ENCODE measurements at regions of chr14 and their contacts with region 1.

Region 1: GRCh38 chr14:21997300-21997699 is 323.7 kb upstream of the OR4E1 start:
- DNase-seq: no peak
- H3K4me3 ChIP-seq: no peak overlapping the region
- H3K27ac ChIP-seq: no peak overlapping the region
- H3K4me1 ChIP-seq: no peaks in the 10 kb centered on the region
- H3K27me3 ChIP-seq: no peaks in the 10 kb centered on the region
- CTCF ChIP-seq: peak; percentile 53 to 71 (median 60)
- EP300 ChIP-seq: no peak
- POLR2A ChIP-seq: no peak
- RAD21 ChIP-seq: peak; percentile 52 to 63

Region 2: GRCh38 chr14:21978184-21978998 is 18.9 kb before region 1 on chr14:
- CTCF ChIA-PET with region 1: interaction called, 40 read pairs
- POLR2A ChIA-PET with region 1: interaction called, 3 read pairs
- DNase-seq: peak in 1 of 2 experiments; percentile 84
- H3K4me3 ChIP-seq: no peak overlapping the region
- H3K27ac ChIP-seq: no peak overlapping the region
- H3K4me1 ChIP-seq: no peaks in the 10 kb centered on the region
- H3K27me3 ChIP-seq: peaks cover 0 to 1% (median 0%) of the 10 kb centered on the region in 4 experiments; a peak in 1 of 7 replicates
- CTCF ChIP-seq: peak; percentile 81 to 93 (median 89)
- EP300 ChIP-seq: no peak
- POLR2A ChIP-seq: no peak
- RAD21 ChIP-seq: peak; percentile 61 to 65

Region 3: GRCh38 chr14:22010545-22011252 is 13.4 kb after region 1 on chr14:
- CTCF ChIA-PET with region 1: interaction called, 24 read pairs
- POLR2A ChIA-PET with region 1: no interaction called
- DNase-seq: no peak
- H3K4me3 ChIP-seq: no peak overlapping the region
- H3K27ac ChIP-seq: no peak overlapping the region
- H3K4me1 ChIP-seq: no peaks in the 10 kb centered on the region
- H3K27me3 ChIP-seq: no peaks in the 10 kb centered on the region
- CTCF ChIP-seq: no peak
- EP300 ChIP-seq: no peak
- POLR2A ChIP-seq: no peak
- RAD21 ChIP-seq: no peak

Region 4: GRCh38 chr14:22047115-22047514 is 49.8 kb after region 1 on chr14:
- CTCF ChIA-PET with region 1: interaction called, 18 read pairs
- POLR2A ChIA-PET with region 1: no interaction called
- DNase-seq: no peak
- H3K4me3 ChIP-seq: no peak overlapping the region
- H3K27ac ChIP-seq: no peak overlapping the region
- H3K4me1 ChIP-seq: no peaks in the 10 kb centered on the region
- H3K27me3 ChIP-seq: no peaks in the 10 kb centered on the region
- CTCF ChIP-seq: peak; percentile 13 to 71 (median 58)
- EP300 ChIP-seq: no peak
- POLR2A ChIP-seq: no peak
- RAD21 ChIP-seq: peak; percentile 55 to 65

Region 5: DNA sequence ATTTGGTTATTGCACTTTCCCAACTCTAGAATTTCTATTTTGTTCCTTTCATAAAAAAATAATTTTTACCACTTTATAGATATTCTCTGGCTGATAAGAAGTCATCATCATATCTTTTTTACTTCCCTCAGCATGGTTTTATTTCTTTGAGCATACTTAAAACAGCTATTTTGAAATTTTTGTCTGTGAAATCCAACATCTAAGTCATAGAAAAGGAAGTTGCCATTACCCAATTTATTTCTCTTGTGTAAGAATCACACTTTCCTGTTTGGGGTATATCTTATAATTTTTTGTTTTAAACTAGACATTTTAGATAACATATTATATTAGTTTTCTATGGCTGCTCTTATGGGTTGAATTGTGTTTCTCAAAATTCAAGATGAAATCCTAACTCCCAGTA is 76.5 kb after region 1 on chr14:
- CTCF ChIA-PET with region 1: no interaction called
- POLR2A ChIA-PET with region 1: no interaction called
- DNase-seq: no peak
- H3K4me3 ChIP-seq: no peak overlapping the region
- H3K27ac ChIP-seq: no peak overlapping the region
- H3K4me1 ChIP-seq: peaks cover 0 to 5% (median 0%) of the 10 kb centered on the region in 4 experiments; a peak in 1 of 7 replicates
- H3K27me3 ChIP-seq: no peaks in the 10 kb centered on the region; a peak in 1 of 7 replicates
- CTCF ChIP-seq: no peak
- EP300 ChIP-seq: no peak
- POLR2A ChIP-seq: no peak
- RAD21 ChIP-seq: no peak

Measured in H1 (cell line).